Activated B cell treated with CpG ODN at 0.5 μM for 24 hours (primary cell): ENCODE measurements at regions of chr12 and their contacts with region 1.

Region 1: GRCh38 chr12:100493396-100494012 is 19.8 kb downstream of the NR1H4 start:
- DNase-seq: no peak
- ATAC-seq: no peak
- H3K4me3 Mint-ChIP-seq: no peak overlapping the region
- H3K27ac Mint-ChIP-seq: no peak overlapping the region
- H3K4me1 Mint-ChIP-seq: no peaks in the 10 kb centered on the region
- H3K27me3 Mint-ChIP-seq: no peaks in the 10 kb centered on the region
- CTCF ChIP-seq: no peak

Region 2: GRCh38 chr12:100448656-100449055 is 44.8 kb before region 1 on chr12:
- CTCF ChIA-PET with region 1: no interaction called
- POLR2A ChIA-PET with region 1: no interaction called
- intact Hi-C with region 1: loop called (anchors 1 kb)
- DNase-seq: no peak
- ATAC-seq: no peak
- H3K4me3 Mint-ChIP-seq: no peak overlapping the region
- H3K27ac Mint-ChIP-seq: no peak overlapping the region
- H3K4me1 Mint-ChIP-seq: no peaks in the 10 kb centered on the region
- H3K27me3 Mint-ChIP-seq: peaks cover 4% of the 10 kb centered on the region
- CTCF ChIP-seq: no peak

Region 3: DNA sequence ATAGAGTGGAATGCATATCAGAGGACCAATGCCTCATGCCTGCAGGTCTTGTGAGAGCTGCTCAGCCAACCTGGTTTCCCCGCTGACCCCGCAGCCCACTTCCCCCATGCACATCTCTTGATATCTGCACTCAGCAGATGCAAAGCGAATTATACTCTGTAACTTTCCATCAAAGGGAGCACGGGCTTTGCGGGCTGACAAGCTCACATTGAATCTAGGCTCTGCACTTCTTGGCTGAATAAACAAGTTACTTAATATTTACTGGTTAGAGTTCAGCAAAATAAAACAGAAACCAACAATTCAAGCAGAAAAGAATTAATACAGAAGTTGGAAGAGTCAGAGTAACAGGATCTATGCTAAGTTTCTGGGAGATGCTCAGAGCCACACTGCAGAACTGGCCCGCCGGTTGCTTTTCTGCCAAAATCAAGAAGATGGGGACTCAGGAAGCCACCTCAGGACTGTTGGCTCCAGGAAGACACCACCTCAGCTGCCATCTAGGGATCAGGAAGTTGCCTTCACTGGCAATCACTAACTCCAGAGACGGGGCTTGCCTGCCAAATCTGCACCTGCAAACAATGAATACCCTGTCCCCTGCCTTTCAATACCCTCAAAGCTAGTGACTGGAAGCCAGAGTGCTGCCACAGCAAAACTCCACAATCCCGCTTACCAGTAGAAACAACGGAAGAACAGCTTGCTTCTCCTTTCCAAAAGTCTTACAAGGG is 26.7 kb after region 1 on chr12:
- CTCF ChIA-PET with region 1: no interaction called
- POLR2A ChIA-PET with region 1: no interaction called
- intact Hi-C with region 1: no loop called
- DNase-seq: no peak
- ATAC-seq: no peak
- H3K4me3 Mint-ChIP-seq: no peak overlapping the region
- H3K27ac Mint-ChIP-seq: no peak overlapping the region
- H3K4me1 Mint-ChIP-seq: no peaks in the 10 kb centered on the region
- H3K27me3 Mint-ChIP-seq: no peaks in the 10 kb centered on the region
- CTCF ChIP-seq: no peak